Activated B cell treated with CpG ODN at 0.5 μM for 24 hours (primary cell): ENCODE measurements at regions of chr10 and their contacts with region 1.

Region 1: GRCh38 chr10:110210674-110211464 is 3.5 kb downstream of the MXI1 start:
- DNase-seq: peak; percentile 84
- ATAC-seq: peak; percentile 73
- H3K4me3 Mint-ChIP-seq: peak overlapping the region; percentile 87
- H3K27ac Mint-ChIP-seq: peak overlapping the region; percentile 79
- H3K4me1 Mint-ChIP-seq: peaks cover 55% of the 10 kb centered on the region
- H3K27me3 Mint-ChIP-seq: peaks cover 2% of the 10 kb centered on the region
- CTCF ChIP-seq: no peak

Region 2: DNA sequence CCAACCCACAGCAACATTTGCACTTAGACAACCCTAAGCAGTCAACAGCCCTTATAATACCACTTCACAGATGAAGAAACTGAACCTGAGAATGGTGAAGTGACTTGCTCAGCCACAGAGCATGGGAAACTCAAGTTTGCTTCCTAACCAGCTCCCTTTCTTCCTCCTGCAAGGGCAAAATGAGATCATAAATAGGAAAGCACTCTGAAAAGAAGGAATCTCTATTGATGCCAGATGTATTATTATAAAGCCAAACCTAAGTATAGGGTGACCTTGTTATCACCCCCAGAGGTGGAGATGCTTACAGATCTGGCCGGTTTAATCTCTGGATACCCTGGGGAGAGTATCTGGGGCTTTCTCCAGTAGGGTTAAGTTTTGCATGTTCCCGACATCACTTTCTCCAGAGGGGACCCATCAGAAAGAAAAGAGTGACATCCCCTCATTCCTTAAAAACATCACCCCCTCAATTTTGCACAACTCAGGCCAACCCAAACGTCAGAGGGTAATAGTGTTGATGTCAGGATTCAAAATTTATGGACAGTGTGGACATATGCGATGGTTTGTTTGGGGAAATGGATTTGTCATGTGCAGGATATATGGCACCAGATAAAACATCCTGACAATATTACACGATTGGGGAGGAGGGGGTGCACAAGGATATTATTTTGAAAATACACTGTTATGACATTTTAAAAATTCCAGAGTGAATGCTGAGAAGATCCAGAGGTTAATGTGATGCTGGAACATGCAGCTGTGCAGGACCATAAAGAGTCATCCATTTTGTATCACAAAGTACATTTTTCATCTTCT is 263.6 kb before region 1 on chr10:
- CTCF ChIA-PET with region 1: no interaction called
- POLR2A ChIA-PET with region 1: no interaction called
- intact Hi-C with region 1: no loop called
- DNase-seq: no peak
- ATAC-seq: no peak
- H3K4me3 Mint-ChIP-seq: no peak overlapping the region
- H3K27ac Mint-ChIP-seq: no peak overlapping the region
- H3K4me1 Mint-ChIP-seq: no peaks in the 10 kb centered on the region
- H3K27me3 Mint-ChIP-seq: no peaks in the 10 kb centered on the region
- CTCF ChIP-seq: no peak

Region 3: DNA sequence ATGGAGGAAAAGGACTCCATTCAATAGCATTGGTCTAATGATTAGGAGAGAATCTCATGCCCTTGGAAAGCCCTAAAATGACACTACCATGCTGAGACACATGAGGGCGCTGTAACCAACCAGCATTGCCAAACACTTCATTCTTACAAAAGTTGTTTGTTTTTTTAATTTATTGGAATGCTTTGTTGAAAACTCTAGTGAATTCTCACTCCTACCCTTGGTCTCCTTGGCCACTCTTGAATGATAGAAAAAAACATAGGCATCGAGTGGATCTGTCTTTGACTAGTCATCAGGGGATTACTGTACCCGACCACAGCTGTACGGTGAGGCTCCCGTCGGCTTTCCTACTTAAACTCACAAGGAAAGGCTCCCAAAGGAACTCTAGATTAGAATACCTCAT is 232.4 kb before region 1 on chr10:
- CTCF ChIA-PET with region 1: no interaction called
- POLR2A ChIA-PET with region 1: no interaction called
- intact Hi-C with region 1: no loop called
- DNase-seq: no peak
- ATAC-seq: peak; percentile 42
- H3K4me3 Mint-ChIP-seq: no peak overlapping the region
- H3K27ac Mint-ChIP-seq: no peak overlapping the region
- H3K4me1 Mint-ChIP-seq: no peaks in the 10 kb centered on the region
- H3K27me3 Mint-ChIP-seq: no peaks in the 10 kb centered on the region
- CTCF ChIP-seq: peak; percentile 19

Region 4: GRCh38 chr10:110036640-110037039 is 174.2 kb before region 1 on chr10:
- CTCF ChIA-PET with region 1: no interaction called
- POLR2A ChIA-PET with region 1: interaction called, 16 read pairs
- intact Hi-C with region 1: no loop called
- DNase-seq: no peak
- ATAC-seq: peak; percentile 25
- H3K4me3 Mint-ChIP-seq: peak overlapping the region; percentile 57
- H3K27ac Mint-ChIP-seq: peak overlapping the region; percentile 11
- H3K4me1 Mint-ChIP-seq: peaks cover 73% of the 10 kb centered on the region
- H3K27me3 Mint-ChIP-seq: no peaks in the 10 kb centered on the region
- CTCF ChIP-seq: no peak

Region 5: GRCh38 chr10:110137142-110137545 is 73.7 kb before region 1 on chr10:
- CTCF ChIA-PET with region 1: interaction called, 20 read pairs
- POLR2A ChIA-PET with region 1: interaction called, 11 read pairs
- intact Hi-C with region 1: loop called (anchors 1 kb)
- DNase-seq: no peak
- ATAC-seq: peak; percentile 66
- H3K4me3 Mint-ChIP-seq: no peak overlapping the region
- H3K27ac Mint-ChIP-seq: peak overlapping the region; percentile 68
- H3K4me1 Mint-ChIP-seq: peaks cover 35% of the 10 kb centered on the region
- H3K27me3 Mint-ChIP-seq: no peaks in the 10 kb centered on the region
- CTCF ChIP-seq: no peak

Region 6: DNA sequence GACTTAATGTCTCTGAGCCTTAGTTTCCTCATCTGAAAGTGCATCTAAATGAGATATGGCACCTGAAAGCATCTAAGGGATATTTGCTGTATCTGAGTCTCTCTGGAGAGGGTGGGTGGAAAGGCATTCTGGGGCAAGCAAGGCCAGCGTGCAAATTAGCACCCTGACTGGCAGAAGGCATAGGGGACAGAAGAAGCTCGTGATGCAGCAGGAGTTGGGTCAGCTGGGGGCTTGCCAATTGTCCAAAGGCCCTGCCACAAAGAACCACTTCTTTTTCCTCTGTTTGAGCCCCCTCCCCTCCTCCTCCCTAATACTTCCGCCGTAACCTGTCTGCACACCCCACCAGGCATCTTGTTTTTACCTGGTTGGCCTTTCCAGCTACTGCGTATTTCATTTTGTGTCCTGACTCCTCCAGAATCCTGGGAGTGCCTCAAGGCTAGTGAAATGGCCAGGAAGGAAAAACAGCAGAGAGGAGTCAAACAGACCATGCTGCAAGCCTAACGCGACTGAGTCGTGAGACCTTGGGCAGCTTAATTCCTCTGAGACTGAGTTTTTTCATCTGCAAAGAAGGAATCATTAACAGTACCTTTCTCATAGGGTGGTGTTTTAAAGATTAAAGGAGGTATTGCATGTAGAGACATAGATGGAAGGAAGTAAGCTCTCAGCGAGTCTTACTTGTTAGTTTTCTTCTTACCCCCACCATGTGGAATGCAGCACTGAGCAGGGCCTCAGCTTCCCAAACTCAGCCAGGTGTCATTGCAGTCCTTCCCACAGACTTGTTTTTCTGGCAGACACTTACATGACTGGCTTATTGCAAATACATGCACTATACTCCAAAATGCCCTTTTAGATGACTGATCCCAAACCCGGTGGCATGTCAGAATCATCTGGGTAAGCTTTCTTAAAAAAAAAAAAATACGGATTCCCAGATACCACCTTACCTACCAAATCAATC is 52.5 kb before region 1 on chr10:
- CTCF ChIA-PET with region 1: interaction called, 3 read pairs
- POLR2A ChIA-PET with region 1: interaction called, 19 read pairs
- intact Hi-C with region 1: loop called (anchors 2 kb)
- DNase-seq: no peak
- ATAC-seq: no peak
- H3K4me3 Mint-ChIP-seq: no peak overlapping the region
- H3K27ac Mint-ChIP-seq: no peak overlapping the region
- H3K4me1 Mint-ChIP-seq: peaks cover 45% of the 10 kb centered on the region
- H3K27me3 Mint-ChIP-seq: peaks cover 19% of the 10 kb centered on the region
- CTCF ChIP-seq: no peak

Region 7: GRCh38 chr10:110225756-110226542 is 15.1 kb after region 1 on chr10:
- CTCF ChIA-PET with region 1: interaction called, 42 read pairs
- POLR2A ChIA-PET with region 1: interaction called, 64 read pairs
- intact Hi-C with region 1: loop called (anchors 1 kb)
- DNase-seq: peak; percentile 83
- ATAC-seq: peak; percentile 51
- H3K4me3 Mint-ChIP-seq: peak overlapping the region; percentile 97
- H3K27ac Mint-ChIP-seq: peak overlapping the region; percentile 96
- H3K4me1 Mint-ChIP-seq: peaks cover 28% of the 10 kb centered on the region
- H3K27me3 Mint-ChIP-seq: no peaks in the 10 kb centered on the region
- CTCF ChIP-seq: no peak

Region 8: DNA sequence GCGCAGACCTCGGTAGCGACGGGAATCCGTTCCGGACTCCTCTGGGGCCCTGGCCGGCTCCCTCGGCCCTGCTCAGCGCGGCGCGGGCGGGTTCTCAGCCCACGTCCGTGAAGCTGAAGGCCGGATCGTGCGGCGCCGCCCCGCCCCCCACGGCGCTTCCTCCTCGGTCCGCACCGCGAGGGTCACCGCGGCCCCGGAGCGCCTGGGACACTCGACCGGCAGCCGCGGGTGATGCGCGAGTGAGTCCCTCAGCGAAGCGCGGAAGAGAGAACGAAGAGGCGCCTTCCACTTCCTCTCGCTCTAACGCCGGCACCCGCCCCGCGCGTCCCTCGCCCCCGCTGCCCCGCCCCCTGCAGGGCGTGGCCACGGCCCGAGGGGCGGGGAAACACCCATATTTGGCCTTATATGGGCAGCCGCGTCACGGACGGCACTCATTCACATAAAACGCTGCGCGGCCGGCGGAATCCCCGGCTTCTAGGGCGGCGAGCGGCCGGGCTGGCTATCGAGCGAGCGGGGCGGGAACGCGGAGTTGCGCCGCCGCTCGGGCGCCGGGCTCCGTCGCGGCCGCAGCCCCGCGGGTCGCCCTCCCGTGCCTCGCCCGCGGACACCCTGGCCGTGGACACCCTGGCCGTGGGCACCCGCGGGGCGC is 286.7 kb after region 1 on chr10 and contains the start of gene DUSP5:
- CTCF ChIA-PET with region 1: no interaction called
- POLR2A ChIA-PET with region 1: no interaction called
- intact Hi-C with region 1: loop called (anchors 5 kb)
- DNase-seq: peak; percentile 99
- ATAC-seq: peak; percentile 87
- H3K4me3 Mint-ChIP-seq: peak within 1 kb of the TSS; percentile 90
- H3K27ac Mint-ChIP-seq: peak within 1 kb of the TSS; percentile 77
- H3K4me1 Mint-ChIP-seq: peaks cover 66% of the 10 kb centered on the region
- H3K27me3 Mint-ChIP-seq: peaks cover 3% of the 10 kb centered on the region
- CTCF ChIP-seq: no peak
- total RNA-seq, gene DUSP5: 26.1 and 28.6 TPM in 2 replicates

Region 9: GRCh38 chr10:110871298-110872084 is 660.6 kb after region 1 on chr10 and contains the start of gene PDCD4:
- CTCF ChIA-PET with region 1: no interaction called
- POLR2A ChIA-PET with region 1: no interaction called
- intact Hi-C with region 1: loop called (anchors 5 kb)
- DNase-seq: peak; percentile 87
- ATAC-seq: peak; percentile 71
- H3K4me3 Mint-ChIP-seq: peak within 1 kb of the TSS; percentile 94
- H3K27ac Mint-ChIP-seq: peak within 1 kb of the TSS; percentile 97
- H3K4me1 Mint-ChIP-seq: peaks cover 76% of the 10 kb centered on the region
- H3K27me3 Mint-ChIP-seq: no peaks in the 10 kb centered on the region
- CTCF ChIP-seq: no peak
- total RNA-seq, gene PDCD4: 143 and 145 TPM in 2 replicates